MCF 10A (cell line): ENCODE measurements at regions of chr4 and their contacts with region 1.

Region 1: DNA sequence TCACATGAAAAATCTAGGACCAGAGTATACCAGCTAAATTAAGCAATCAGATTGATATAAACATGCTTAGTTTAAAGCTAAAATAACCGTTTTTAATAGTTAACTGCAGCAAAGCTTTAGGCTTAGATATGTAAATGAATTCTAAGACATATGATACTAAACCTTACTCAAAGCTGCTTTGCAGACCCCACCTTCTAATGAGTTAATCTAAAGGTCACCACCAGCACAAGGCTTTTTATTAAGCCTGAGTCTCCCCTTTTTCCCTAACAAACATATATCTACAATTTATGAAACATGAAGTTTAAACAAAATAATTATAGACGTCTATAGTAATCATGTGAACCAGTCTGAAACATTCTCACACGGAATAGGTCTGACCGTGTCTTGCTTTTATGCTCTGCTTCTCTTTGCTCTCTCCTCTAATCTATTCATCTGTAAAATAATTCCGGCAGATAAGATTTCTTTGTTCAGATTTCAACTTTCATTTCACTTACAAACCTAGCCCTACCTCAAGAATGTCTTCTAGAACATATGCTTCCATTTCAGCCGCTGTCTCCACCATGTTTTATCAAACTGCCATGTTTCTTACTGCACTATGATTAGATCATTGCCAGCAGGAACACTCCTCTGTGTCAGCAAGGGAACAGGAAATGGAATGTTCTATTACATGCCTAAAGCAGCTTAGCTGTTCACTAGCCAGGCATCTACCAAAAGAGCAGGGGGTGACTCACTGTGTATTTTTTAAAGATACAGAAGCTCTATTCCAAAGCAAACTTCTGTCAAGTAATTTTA is 35.9 kb downstream of the ANKRD17 start:
- DNase-seq: peak; percentile 90
- H3K4me3 Mint-ChIP-seq: no peak overlapping the region
- H3K27ac Mint-ChIP-seq: no peak overlapping the region
- H3K4me1 Mint-ChIP-seq: peaks cover 11% of the 10 kb centered on the region
- H3K27me3 Mint-ChIP-seq: no peaks in the 10 kb centered on the region
- CTCF ChIP-seq: no peak

Region 2: GRCh38 chr4:73208376-73208775 is 14.3 kb before region 1 on chr4:
- CTCF ChIA-PET with region 1: no interaction called
- POLR2A ChIA-PET with region 1: interaction called, 11 read pairs
- intact Hi-C with region 1: no loop called
- DNase-seq: no peak
- H3K4me3 Mint-ChIP-seq: no peak overlapping the region
- H3K27ac Mint-ChIP-seq: no peak overlapping the region
- H3K4me1 Mint-ChIP-seq: peaks cover 27% of the 10 kb centered on the region
- H3K27me3 Mint-ChIP-seq: no peaks in the 10 kb centered on the region
- CTCF ChIP-seq: no peak

Region 3: DNA sequence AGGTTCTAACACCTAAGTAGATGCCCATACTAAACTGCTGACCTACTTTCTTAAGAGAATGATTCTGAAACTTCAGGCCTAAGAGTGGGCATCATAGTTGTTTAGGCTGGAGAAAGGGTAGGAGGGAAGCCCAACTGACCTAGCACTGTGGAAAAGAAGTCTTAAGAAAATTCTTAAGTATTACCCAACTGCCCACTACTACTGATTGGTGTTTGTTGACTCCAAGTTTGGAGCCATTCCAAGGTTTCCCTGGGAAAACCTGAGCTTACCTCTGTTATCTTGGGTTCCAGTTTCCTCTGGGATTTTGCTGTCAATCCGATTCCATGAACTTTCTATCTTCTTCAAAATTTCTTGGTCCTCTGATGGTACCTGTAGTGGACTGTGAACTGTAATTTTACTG is 12.1 kb after region 1 on chr4:
- CTCF ChIA-PET with region 1: no interaction called
- POLR2A ChIA-PET with region 1: interaction called, 21 read pairs
- intact Hi-C with region 1: no loop called
- DNase-seq: peak; percentile 55
- H3K4me3 Mint-ChIP-seq: no peak overlapping the region
- H3K27ac Mint-ChIP-seq: no peak overlapping the region
- H3K4me1 Mint-ChIP-seq: peaks cover 28% of the 10 kb centered on the region
- H3K27me3 Mint-ChIP-seq: no peaks in the 10 kb centered on the region
- CTCF ChIP-seq: no peak

Region 4: DNA sequence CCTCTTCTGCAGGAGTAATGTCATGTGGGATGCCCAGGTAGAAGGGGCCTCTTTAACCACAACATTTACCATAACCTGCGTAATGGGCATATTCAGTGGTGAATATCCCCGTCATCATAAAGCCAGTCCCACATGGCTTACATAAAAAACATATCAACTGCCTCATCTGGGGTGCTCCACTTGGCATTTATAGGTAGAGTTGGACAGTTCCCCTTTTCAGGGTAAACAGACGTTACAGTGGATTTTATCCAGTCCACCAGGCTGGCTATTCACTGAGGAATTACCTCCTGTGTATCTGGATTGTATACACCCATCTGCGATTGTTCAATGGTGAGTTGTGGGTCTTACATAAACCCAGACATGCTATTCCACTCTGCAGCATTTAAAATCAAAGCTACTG is 106.6 kb after region 1 on chr4:
- CTCF ChIA-PET with region 1: no interaction called
- POLR2A ChIA-PET with region 1: no interaction called
- intact Hi-C with region 1: no loop called
- DNase-seq: no peak
- H3K4me3 Mint-ChIP-seq: no peak overlapping the region
- H3K27ac Mint-ChIP-seq: no peak overlapping the region
- H3K4me1 Mint-ChIP-seq: peaks cover 8% of the 10 kb centered on the region
- H3K27me3 Mint-ChIP-seq: no peaks in the 10 kb centered on the region
- CTCF ChIP-seq: no peak

Region 5: DNA sequence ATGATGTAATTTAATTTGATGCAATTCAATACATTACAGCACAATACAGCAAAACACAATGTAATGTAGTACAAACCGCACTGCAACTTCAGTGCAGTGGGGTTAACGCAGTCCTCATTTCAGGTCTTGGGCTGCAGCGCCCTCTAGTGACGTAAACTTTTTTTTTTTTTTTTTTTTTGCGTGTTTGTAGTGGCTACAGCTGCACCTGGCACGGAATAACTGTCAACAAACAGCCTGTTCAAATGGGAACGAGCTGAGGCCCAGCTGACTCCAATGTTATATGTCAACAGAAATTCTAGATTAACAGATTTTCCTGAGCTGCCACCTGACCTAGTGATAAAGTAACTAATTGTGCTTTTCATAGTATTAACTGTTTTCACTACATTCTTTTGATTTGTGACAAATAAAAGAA is 431.0 kb after region 1 on chr4:
- CTCF ChIA-PET with region 1: no interaction called
- POLR2A ChIA-PET with region 1: no interaction called
- intact Hi-C with region 1: no loop called
- DNase-seq: peak; percentile 71
- H3K4me3 Mint-ChIP-seq: no peak overlapping the region
- H3K27ac Mint-ChIP-seq: no peak overlapping the region
- H3K4me1 Mint-ChIP-seq: peaks cover 14% of the 10 kb centered on the region
- H3K27me3 Mint-ChIP-seq: no peaks in the 10 kb centered on the region
- CTCF ChIP-seq: peak; percentile 52